Activated T-helper 1 cell treated with anti-CD3 and anti-CD28 coated beads, Interleukin-12 subunit alpha, Interleukin-12 subunit beta, Interleukin-2, Interleukin-4 antibody, amounts not matched to agents 30 ng/mL and 10 ng/mL and 1 ng/mL, durations not matched to agents 14 hours and 24 hours and 36 hours (primary cell): ENCODE measurements at regions of chr9 and their contacts with region 1.

Region 1: GRCh38 chr9:128656416-128657343 is at the start of gene DYNC2I2:
- DNase-seq: peak; percentile 95
- H3K4me3 Mint-ChIP-seq: peak within 1 kb of the TSS; percentile 91
- H3K27ac Mint-ChIP-seq: peak within 1 kb of the TSS; percentile 100
- H3K4me1 Mint-ChIP-seq: peaks cover 15% of the 10 kb centered on the region
- H3K27me3 Mint-ChIP-seq: no peaks in the 10 kb centered on the region
- total RNA-seq, gene DYNC2I2: 41.5 and 43.9 TPM in 2 replicates

Region 2: DNA sequence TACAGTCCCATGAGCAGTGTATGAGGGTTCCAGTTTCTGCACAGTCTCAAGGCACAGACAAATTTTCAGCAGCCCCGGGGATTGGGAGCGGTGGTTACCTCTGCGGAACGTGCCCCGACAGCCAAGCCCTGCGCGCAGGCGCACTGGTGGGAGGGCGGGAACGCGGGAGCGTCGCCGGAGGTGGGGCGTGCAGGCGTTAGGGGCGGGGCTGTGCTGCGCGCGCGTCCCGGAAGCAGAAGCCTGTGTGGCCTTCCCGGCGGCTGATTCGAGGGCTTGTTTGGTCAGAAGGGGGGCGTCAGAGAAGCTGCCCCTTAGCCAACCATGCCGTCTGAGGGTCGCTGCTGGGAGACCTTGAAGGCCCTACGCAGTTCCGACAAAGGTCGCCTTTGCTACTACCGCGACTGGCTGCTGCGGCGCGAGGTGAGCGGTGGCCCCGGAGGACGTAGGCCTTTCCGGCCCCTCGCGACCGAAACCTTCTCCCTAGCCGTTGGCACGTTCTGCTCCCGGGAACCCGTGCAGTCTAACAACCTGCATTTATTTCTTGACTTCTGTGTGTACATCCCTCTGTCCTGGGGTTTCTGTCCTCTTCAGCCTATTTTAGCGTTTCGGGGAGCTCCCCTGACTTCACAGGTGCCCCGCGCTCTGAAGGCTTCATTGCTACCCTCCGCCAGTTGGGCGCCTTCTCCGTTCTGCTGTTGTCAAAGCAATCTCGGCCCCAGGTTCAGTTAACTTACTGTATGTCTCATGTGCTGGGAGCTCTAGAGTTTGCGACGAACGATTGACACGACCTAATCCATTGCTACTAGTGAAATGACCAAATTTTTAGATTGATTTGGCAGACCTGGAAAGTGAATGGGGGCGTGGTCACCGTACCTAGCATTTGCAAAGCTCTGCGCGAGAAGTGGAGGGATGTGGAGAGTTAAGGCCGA is 151.9 kb before region 1 on chr9 and contains the start of gene GLE1:
- intact Hi-C with region 1: loop called (anchors 1 kb)
- DNase-seq: peak; percentile 97
- H3K4me3 Mint-ChIP-seq: peak within 1 kb of the TSS; percentile 99
- H3K27ac Mint-ChIP-seq: peak within 1 kb of the TSS; percentile 99
- H3K4me1 Mint-ChIP-seq: peaks cover 23% of the 10 kb centered on the region
- H3K27me3 Mint-ChIP-seq: no peaks in the 10 kb centered on the region
- total RNA-seq, gene GLE1: 51.4 and 52.0 TPM in 2 replicates

Region 3: DNA sequence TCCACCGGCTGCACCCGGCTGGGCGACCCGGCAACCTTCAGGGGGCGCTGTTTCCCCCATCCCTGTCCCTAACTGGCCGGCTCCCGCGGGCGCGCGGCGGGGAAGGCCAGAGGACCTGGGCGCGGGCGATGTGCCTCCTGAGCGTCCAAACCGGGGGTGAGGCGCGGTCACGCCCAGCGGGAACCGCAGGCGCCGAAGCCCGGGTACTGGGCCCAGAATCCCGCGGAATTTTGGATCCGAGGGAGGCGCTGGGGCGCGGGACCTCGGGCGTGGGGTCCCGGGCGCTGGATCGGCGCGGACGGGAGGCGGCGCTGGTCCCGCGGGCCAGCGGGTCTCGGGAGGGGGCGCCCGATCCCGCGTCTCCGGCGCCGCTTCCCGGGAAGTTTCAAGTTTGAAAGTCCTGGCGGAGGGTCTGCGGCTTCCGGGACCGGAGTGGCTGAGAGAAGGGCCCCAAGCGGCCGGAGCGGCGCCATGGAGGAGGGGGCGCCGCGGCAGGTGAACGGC is 45.8 kb after region 1 on chr9 and contains the start of gene PKN3:
- intact Hi-C with region 1: loop called (anchors 1 kb)
- DNase-seq: peak; percentile 82
- H3K4me3 Mint-ChIP-seq: peak within 1 kb of the TSS; percentile 86
- H3K27ac Mint-ChIP-seq: peak within 1 kb of the TSS; percentile 77
- H3K4me1 Mint-ChIP-seq: no peaks in the 10 kb centered on the region
- H3K27me3 Mint-ChIP-seq: peaks cover 2% of the 10 kb centered on the region
- total RNA-seq, gene PKN3: 17.7 and 19.3 TPM in 2 replicates